ENCODE measurements at regions of chr1 and their contacts with region 1.

Region 1: DNA sequence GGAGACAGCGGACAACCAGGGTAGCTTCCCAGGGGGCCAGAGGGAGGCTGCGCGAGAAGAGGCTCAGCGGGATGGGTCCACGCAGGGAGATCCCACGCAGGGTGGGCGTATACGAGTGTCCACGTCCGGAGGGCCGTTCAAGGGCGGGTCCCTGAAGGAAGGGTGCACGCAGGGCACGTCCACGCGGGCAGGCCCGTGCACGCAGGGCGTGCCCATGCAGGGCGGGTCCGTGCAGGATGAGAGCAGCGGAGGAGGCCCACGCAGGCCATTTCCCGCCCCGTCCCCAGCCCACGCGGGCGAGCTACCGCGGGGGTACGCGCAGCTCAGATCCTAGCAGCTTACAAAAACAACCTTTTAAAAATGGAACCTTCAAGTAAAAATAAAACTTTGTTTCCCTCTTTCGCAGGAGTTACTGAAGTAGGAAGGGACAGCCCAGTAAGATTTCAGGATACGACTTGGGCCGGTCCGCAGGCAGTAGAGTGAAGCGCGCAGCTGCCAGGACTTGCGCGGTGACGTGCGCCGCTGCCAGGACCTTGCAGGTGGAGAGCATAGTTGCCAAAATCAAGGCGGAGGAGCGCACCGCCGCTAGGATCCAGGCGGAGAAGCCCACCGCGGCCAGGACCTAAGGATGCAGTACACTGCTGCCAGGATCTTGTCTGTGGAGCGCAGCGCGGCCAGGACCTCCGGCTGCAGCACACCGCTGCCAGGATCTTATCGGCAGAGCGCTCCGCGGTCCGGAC is 416 bp upstream of the RNF187 start:
- DNase-seq: peak; percentile 83
- H3K4me3 ChIP-seq: peak overlapping the region; percentile 50 to 86 (median 73)
- H3K27ac ChIP-seq: peak overlapping the region; percentile 96 to 99 (median 96)
- H3K4me1 ChIP-seq: peaks cover 4 to 40% (median 29%) of the 10 kb centered on the region in 4 donors
- H3K27me3 ChIP-seq: no peaks in the 10 kb centered on the region
- CTCF ChIP-seq: no peak
- EP300 ChIP-seq: peak in 1 of 4 donors; percentile 54
- POLR2A ChIP-seq: peak in 1 of 2 donors; percentile 29

Region 2: DNA sequence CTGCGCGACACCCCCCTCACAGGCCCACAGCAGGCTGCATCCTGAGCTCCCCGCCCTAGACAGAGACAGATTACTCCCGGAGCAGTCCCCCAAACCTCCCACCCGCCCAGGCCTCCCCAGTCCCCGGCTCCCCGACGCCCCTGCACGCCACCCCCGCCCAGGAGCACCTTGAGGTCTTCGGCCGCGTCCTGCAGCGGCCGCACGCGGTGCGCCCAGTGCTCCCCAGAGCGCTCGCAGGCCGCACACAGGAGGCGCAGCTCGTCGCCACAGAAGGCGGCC is 80.8 kb before region 1 on chr1:
- intact Hi-C with region 1: loop called (anchors 1 kb)
- DNase-seq: no peak
- H3K4me3 ChIP-seq: peak overlapping the region; percentile 75 to 99 (median 83)
- H3K27ac ChIP-seq: peak overlapping the region; percentile 81 to 87 (median 86)
- H3K4me1 ChIP-seq: peaks cover 0 to 47% (median 42%) of the 10 kb centered on the region in 4 donors
- H3K27me3 ChIP-seq: no peaks in the 10 kb centered on the region
- CTCF ChIP-seq: no peak
- EP300 ChIP-seq: no peak
- POLR2A ChIP-seq: no peak

Region 3: GRCh38 chr1:228434686-228435085 is 52.1 kb before region 1 on chr1:
- intact Hi-C with region 1: no loop called
- DNase-seq: no peak
- H3K4me3 ChIP-seq: no peak overlapping the region
- H3K27ac ChIP-seq: no peak overlapping the region
- H3K4me1 ChIP-seq: no peaks in the 10 kb centered on the region
- H3K27me3 ChIP-seq: peaks cover 0 to 95% (median 21%) of the 10 kb centered on the region in 3 donors
- CTCF ChIP-seq: no peak
- EP300 ChIP-seq: no peak
- POLR2A ChIP-seq: no peak